ENCODE measurements at regions of chr3 and their contacts with region 1.

Region 1: GRCh38 chr3:133426721-133427120 is 26.9 kb downstream of the BFSP2 start:
- DNase-seq: no peak
- ATAC-seq: no peak

Region 2: GRCh38 chr3:132730891-132731580 is 695.7 kb before region 1 on chr3:
- intact Hi-C with region 1: loop called (anchors 2 kb)
- DNase-seq: no peak
- ATAC-seq: peak; percentile 88

Region 3: DNA sequence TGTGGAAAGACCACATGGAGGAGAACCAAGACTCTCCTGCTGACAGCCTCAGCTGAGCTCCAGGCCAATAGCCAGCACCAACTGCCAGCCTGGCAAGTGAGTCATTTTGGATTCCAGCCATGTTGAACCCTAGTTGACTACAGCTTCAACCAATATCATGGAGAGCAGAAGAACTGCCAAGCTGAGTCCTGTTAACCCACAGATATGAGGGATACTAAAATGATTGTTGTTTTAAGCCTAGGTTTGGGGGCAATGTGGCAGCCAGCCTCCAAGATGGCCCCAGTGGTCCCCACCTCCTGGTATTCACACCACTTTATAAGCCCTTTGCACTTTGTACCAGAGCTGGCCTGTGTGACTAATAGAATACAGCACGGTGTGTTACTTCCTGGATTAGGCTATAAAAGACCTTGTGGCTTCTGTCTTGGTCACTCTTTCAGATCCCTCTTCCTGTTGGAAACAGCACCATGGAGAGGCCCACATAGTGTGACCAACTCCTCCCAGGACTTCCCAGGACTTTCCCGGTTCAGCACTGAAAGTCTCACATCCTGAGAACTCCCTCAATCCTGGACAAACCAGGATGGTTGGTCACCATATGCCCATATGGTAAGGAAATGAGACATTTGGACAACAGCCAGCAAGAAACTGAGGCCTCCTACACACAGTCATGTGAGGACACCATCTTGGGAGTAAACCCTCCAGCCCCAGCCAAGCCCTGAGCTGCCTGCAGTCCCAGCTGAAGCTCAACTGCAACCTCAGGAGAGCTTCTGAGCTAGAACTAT is 114.4 kb after region 1 on chr3:
- intact Hi-C with region 1: no loop called
- DNase-seq: no peak
- ATAC-seq: no peak

Measured in Right ventricle myocardium superior (tissue), 1 donor.